ENCODE measurements at regions of chr12 and their contacts with region 1.

Region 1: GRCh38 chr12:45543906-45544315 is 185.6 kb upstream of the ARID2 start:
- DNase-seq: peak; percentile 82
- ATAC-seq: peak; percentile 90
- H3K4me3 ChIP-seq: no peak overlapping the region
- H3K4me3 Mint-ChIP-seq: no peak overlapping the region
- H3K27ac ChIP-seq: no peak overlapping the region
- H3K27ac Mint-ChIP-seq: no peak overlapping the region
- H3K4me1 ChIP-seq: no peaks in the 10 kb centered on the region
- H3K4me1 Mint-ChIP-seq: peaks cover 4% of the 10 kb centered on the region
- H3K27me3 ChIP-seq: no peaks in the 10 kb centered on the region
- H3K27me3 Mint-ChIP-seq: no peaks in the 10 kb centered on the region
- CTCF ChIP-seq: peak; percentile 84

Region 2: GRCh38 chr12:45532113-45532512 is 11.8 kb before region 1 on chr12:
- CTCF ChIA-PET with region 1: interaction called, 15 read pairs
- POLR2A ChIA-PET with region 1: no interaction called
- intact Hi-C with region 1: no loop called
- DNase-seq: no peak
- ATAC-seq: no peak
- H3K4me3 ChIP-seq: no peak overlapping the region
- H3K4me3 Mint-ChIP-seq: no peak overlapping the region
- H3K27ac ChIP-seq: no peak overlapping the region
- H3K27ac Mint-ChIP-seq: no peak overlapping the region
- H3K4me1 ChIP-seq: no peaks in the 10 kb centered on the region
- H3K4me1 Mint-ChIP-seq: no peaks in the 10 kb centered on the region
- H3K27me3 ChIP-seq: no peaks in the 10 kb centered on the region
- H3K27me3 Mint-ChIP-seq: peaks cover 22% of the 10 kb centered on the region
- CTCF ChIP-seq: no peak

Region 3: GRCh38 chr12:45612044-45612794 is 68.3 kb after region 1 on chr12:
- CTCF ChIA-PET with region 1: no interaction called
- POLR2A ChIA-PET with region 1: no interaction called
- intact Hi-C with region 1: no loop called
- DNase-seq: no peak
- ATAC-seq: no peak
- H3K4me3 ChIP-seq: no peak overlapping the region
- H3K4me3 Mint-ChIP-seq: no peak overlapping the region
- H3K27ac ChIP-seq: no peak overlapping the region
- H3K27ac Mint-ChIP-seq: no peak overlapping the region
- H3K4me1 ChIP-seq: peaks cover 0 to 4% of the 10 kb centered on the region in 2 donors
- H3K4me1 Mint-ChIP-seq: peaks cover 18% of the 10 kb centered on the region
- H3K27me3 ChIP-seq: no peaks in the 10 kb centered on the region
- H3K27me3 Mint-ChIP-seq: no peaks in the 10 kb centered on the region
- CTCF ChIP-seq: no peak

Region 4: DNA sequence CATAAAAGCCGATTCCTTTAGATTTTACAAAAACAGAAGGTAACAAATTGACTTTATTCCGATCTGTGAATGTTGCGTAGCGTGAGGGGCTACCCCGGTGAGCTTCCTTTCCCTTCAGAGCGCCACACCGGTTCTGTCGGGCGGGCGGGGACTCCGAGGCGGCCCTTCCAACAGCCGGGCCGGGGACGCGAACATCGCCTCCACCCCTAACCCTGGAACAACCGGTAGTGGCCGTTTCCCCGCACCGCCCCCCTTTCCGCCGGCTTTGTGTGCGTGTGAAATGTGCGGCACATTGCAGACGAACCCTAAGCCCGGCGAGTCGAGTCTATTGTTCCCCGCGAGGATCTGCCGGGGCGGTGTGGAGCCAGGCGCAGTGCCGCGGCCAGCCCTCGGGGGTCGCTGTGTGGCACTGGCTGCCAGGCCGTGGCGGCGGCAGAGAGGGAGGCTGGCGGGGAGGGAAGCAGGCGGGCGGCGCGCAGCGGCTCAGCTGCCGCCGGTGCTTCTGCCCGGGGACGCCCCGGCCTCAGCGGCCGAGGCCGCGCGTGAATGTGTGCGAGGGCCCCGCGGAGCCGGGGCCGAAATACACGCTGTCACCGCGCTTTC is 184.8 kb after region 1 on chr12:
- CTCF ChIA-PET with region 1: interaction called, 151 read pairs
- POLR2A ChIA-PET with region 1: interaction called, 4 read pairs
- intact Hi-C with region 1: loop called (anchors 1 kb)
- DNase-seq: peak; percentile 98
- ATAC-seq: peak; percentile 68
- H3K4me3 ChIP-seq: peak overlapping the region; percentile 87 to 98 (median 95)
- H3K4me3 Mint-ChIP-seq: peak overlapping the region; percentile 100
- H3K27ac ChIP-seq: peak overlapping the region; percentile 98 to 99
- H3K27ac Mint-ChIP-seq: peak overlapping the region; percentile 99
- H3K4me1 ChIP-seq: peaks cover 16 to 38% of the 10 kb centered on the region in 2 donors
- H3K4me1 Mint-ChIP-seq: peaks cover 36% of the 10 kb centered on the region
- H3K27me3 ChIP-seq: no peaks in the 10 kb centered on the region
- H3K27me3 Mint-ChIP-seq: no peaks in the 10 kb centered on the region
- CTCF ChIP-seq: peak; percentile 93

Region 5: GRCh38 chr12:45756666-45757065 is 212.8 kb after region 1 on chr12:
- CTCF ChIA-PET with region 1: interaction called, 17 read pairs
- POLR2A ChIA-PET with region 1: no interaction called
- intact Hi-C with region 1: no loop called
- DNase-seq: no peak
- ATAC-seq: no peak
- H3K4me3 ChIP-seq: no peak overlapping the region
- H3K4me3 Mint-ChIP-seq: no peak overlapping the region
- H3K27ac ChIP-seq: no peak overlapping the region
- H3K27ac Mint-ChIP-seq: no peak overlapping the region
- H3K4me1 ChIP-seq: peaks cover 0 to 3% of the 10 kb centered on the region in 2 donors
- H3K4me1 Mint-ChIP-seq: peaks cover 38% of the 10 kb centered on the region
- H3K27me3 ChIP-seq: no peaks in the 10 kb centered on the region
- H3K27me3 Mint-ChIP-seq: no peaks in the 10 kb centered on the region
- CTCF ChIP-seq: no peak

Region 6: DNA sequence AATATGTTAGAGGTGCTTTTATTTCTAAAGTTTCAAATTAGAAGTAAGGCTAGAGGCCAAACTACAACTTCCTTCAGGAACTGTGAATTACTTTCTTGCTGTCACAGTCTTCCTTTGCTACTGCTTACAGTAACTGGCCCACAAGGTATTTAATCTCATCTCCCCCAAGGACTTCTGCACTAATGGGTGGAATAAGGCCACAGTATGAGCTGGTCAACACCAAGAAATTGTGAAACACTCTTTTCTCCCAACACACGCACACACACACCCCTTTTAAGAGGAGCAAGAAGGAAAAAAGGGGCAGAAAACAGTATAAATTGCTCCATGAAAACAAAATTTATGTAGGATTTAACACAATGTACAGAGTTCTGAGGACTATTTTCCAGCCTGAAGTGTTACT is 400.9 kb after region 1 on chr12:
- CTCF ChIA-PET with region 1: no interaction called
- POLR2A ChIA-PET with region 1: no interaction called
- intact Hi-C with region 1: loop called (anchors 10 kb)
- DNase-seq: no peak
- ATAC-seq: no peak
- H3K4me3 ChIP-seq: no peak overlapping the region
- H3K4me3 Mint-ChIP-seq: no peak overlapping the region
- H3K27ac ChIP-seq: no peak overlapping the region
- H3K27ac Mint-ChIP-seq: no peak overlapping the region
- H3K4me1 ChIP-seq: no peaks in the 10 kb centered on the region
- H3K4me1 Mint-ChIP-seq: peaks cover 1% of the 10 kb centered on the region
- H3K27me3 ChIP-seq: no peaks in the 10 kb centered on the region
- H3K27me3 Mint-ChIP-seq: no peaks in the 10 kb centered on the region
- CTCF ChIP-seq: no peak

Measured in B cell (primary cell).